ENCODE measurements at regions of chr14 and their contacts with region 1.

Region 1: DNA sequence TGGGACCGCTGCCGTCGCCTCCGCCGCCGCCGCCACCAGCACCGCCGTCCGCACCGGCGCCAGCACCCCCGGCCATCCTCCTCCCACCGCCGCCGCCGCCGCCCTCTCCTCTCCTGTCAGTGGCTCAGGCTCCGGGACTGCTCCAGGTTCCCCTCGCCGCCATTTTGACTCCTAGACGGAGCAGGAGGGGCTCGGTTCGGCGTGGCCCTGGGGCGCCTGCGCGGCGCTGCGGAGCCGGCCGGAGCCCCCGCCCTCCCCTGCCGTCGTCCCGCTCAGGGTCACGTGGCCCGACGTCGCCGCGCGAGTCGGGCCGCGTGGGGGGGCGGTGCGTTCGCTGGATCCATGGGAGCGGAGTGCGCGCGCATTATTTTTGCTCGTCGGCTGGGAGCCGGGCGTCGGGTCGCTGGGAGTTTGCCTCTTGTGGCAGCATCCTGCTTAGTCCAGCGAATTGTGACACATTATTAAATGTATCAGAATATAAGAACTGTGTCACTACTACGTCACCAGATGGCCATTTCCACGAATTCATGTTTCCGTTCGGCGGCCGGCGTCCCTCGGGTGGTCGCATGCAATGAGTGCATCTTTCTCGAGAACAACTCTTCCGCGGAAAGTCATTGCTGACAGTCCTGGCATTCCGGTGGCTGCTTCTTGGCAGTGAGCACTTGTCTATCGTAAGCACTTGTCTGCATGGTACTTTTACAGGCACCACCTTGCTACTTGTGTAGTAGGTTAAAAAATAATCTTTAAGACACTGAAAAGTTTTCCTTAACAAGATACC is at the start of gene BTBD7:
- DNase-seq: peak; percentile 90
- H3K4me3 ChIP-seq: peak within 1 kb of the TSS; percentile 84 to 94
- H3K27ac ChIP-seq: peak within 1 kb of the TSS; percentile 94 to 97
- H3K4me1 ChIP-seq: peaks cover 5% of the 10 kb centered on the region
- H3K27me3 ChIP-seq: no peaks in the 10 kb centered on the region
- CTCF ChIP-seq: peak in 1 of 4 experiments; percentile 52
- POLR2A ChIP-seq: peak; percentile 79
- total RNA-seq, gene BTBD7: 23.8 to 25.8 TPM

Region 2: GRCh38 chr14:93206793-93207467 is 126.1 kb before region 1 on chr14 and contains the starts of genes GON7 and UBR7:
- intact Hi-C with region 1: loop called (anchors 5 kb)
- DNase-seq: peak; percentile 96
- H3K4me3 ChIP-seq: peak within 1 kb of the TSS; percentile 69 to 70
- H3K27ac ChIP-seq: peak within 1 kb of the TSS; percentile 69 to 75
- H3K4me1 ChIP-seq: no peaks in the 10 kb centered on the region
- H3K27me3 ChIP-seq: no peaks in the 10 kb centered on the region
- CTCF ChIP-seq: peak in 3 of 4 experiments; percentile 25 to 51 (median 48)
- POLR2A ChIP-seq: peak; percentile 56
- total RNA-seq, gene GON7: 8.7 to 17.4 TPM
- total RNA-seq, gene UBR7: 22.4 to 26.2 TPM

Region 3: DNA sequence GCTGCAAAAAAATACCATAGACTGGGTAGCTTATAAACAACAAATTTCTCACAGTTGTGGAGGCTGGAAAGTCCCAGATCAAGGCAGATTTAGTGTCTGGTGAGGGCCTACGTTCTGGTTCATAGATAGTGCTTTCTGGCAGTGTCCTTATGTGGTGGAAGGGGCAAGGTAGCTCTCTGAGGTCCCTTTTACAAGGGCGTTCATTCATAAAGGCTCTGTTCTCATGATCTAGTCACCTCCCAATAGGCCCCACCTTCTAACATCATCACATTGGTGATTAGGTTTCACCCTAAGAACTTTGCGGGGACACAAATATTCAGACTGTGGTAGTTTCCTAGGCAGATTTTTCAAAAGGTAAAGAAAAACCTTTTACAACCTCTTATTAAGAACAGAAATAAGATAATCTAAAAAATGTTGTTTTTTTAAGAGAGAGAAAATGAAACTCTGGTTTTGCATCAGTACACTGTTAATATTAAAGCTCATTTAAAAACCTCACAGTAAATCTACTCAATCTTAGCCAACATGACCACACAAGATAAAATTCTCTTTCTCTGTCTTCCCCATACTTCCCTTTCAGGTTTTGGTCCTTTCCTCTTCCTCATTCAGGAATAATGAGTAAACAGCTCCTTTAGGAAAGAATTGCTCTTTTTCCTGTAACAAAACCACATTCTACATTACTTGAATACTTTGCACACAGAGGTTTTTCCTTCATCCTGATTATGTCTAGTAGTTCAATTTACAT is 215.2 kb after region 1 on chr14:
- intact Hi-C with region 1: no loop called
- DNase-seq: no peak
- H3K4me3 ChIP-seq: no peak overlapping the region
- H3K27ac ChIP-seq: no peak overlapping the region
- H3K4me1 ChIP-seq: no peaks in the 10 kb centered on the region
- H3K27me3 ChIP-seq: no peaks in the 10 kb centered on the region
- CTCF ChIP-seq: no peak
- POLR2A ChIP-seq: no peak